OCI-LY7 (cell line): ENCODE measurements at regions of chr4 and their contacts with region 1.

Region 1: GRCh38 chr4:143489106-143489505 is 24.4 kb upstream of the SMARCA5 start:
- DNase-seq: no peak
- H3K4me3 ChIP-seq: no peak overlapping the region
- H3K27ac ChIP-seq: no peak overlapping the region
- H3K4me1 ChIP-seq: no peaks in the 10 kb centered on the region
- CTCF ChIP-seq: no peak

Region 2: DNA sequence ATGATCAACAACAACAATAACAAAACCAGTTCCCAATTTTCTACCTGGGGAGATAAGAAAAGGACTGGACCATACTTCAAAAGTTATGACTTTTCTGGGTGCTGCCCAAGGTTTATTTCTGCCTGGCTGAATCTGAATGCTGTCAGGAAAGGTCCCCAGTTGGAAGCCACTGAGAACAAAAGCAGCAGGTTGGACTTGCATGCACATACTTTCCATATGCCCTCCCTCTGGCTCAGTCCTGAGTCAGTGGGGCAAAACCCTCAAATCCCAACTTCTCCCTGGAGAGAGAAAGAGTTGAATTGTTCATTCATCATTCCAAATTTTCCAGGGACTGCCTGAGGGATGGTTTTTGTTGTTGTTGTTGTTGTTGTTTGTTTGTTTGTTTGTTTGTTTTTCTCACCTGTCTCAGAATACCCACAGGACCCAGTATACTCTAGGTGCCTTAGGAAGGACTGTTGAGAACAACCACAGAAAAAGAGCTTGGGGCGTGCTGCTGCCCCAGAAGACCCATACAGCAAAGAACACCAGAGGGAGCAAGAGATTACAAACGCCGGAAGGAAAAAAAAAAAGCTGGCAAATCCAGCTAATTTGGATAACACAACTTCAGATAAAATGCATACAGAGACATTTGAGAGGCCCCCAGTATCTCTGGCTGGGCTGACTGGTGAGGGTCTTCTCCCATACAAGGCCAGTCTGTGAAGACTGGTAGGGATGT is 504.1 kb before region 1 on chr4:
- CTCF ChIA-PET with region 1: no interaction called
- POLR2A ChIA-PET with region 1: no interaction called
- intact Hi-C with region 1: loop called (anchors 5 kb)
- DNase-seq: peak; percentile 6
- H3K4me3 ChIP-seq: no peak overlapping the region
- H3K27ac ChIP-seq: no peak overlapping the region
- H3K4me1 ChIP-seq: no peaks in the 10 kb centered on the region
- CTCF ChIP-seq: peak; percentile 65

Region 3: DNA sequence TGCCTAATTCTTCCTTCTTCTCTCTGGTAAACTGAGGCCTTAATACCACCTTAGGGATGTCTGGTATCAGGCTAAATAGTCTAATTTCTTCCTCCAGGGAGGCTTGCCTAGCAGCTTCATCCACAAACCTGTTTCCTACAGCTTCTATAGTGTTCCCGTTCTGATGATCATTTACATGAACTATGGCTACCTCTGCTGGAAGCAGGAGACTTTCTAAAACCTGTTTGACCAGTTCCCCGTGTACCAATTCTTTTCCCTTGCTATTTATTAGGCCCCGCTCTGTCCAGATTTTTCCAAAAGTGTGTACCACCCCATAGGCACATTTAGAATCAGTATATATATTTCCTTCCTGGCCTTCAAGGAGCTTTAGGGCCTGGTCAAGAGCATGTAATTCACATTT is 310.2 kb before region 1 on chr4:
- CTCF ChIA-PET with region 1: no interaction called
- POLR2A ChIA-PET with region 1: no interaction called
- intact Hi-C with region 1: no loop called
- DNase-seq: no peak
- H3K4me3 ChIP-seq: no peak overlapping the region
- H3K27ac ChIP-seq: no peak overlapping the region
- H3K4me1 ChIP-seq: peaks cover 17% of the 10 kb centered on the region
- CTCF ChIP-seq: no peak